GM12878 (cell line): ENCODE measurements at regions of chr4 and their contacts with region 1.

Region 1: DNA sequence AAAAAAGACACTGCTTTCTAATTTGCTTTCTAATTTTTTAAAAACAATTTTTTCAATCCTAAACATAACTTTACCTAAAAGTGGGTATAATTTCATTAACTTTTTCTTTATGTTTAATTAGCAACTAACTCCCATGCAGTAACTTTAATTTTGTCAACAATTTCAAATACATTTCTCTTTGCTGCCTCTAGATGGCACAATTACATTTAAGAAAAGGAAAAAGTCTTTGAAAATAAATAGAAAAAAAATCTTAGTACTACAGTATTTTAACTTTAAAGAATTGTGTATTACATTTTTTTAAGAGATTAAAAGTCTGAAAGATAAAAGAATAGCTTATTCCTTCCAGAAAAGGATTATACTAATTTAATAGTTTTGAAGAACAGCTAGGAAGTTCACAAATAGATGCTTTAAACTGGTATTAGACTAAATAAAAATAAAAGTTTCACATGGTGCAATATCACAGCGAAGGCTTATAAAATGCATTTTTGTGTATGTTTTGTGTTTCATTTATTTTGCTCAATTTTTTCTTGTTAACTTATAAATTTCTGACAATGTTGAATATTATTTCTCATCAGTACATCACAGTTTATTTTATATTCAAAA is 105.1 kb downstream of the ADGRA3 start:
- DNase-seq: no peak
- ATAC-seq: no peak
- H3K4me3 ChIP-seq: no peak overlapping the region
- H3K27ac ChIP-seq: no peak overlapping the region
- H3K4me1 ChIP-seq: no peaks in the 10 kb centered on the region
- H3K27me3 ChIP-seq: no peaks in the 10 kb centered on the region
- CTCF ChIP-seq: peak in 2 of 3 experiments; percentile 31 to 46; a peak in 4 of 6 replicates
- EP300 ChIP-seq: no peak
- POLR2A ChIP-seq: no peak
- RAD21 ChIP-seq: peak; percentile 34; the same call in 1 of the 2 replicates

Region 2: GRCh38 chr4:22434895-22435294 is 24.1 kb after region 1 on chr4:
- CTCF ChIA-PET with region 1: interaction called, 14 read pairs
- POLR2A ChIA-PET with region 1: no interaction called
- RAD21 ChIA-PET with region 1: interaction called, 11 read pairs
- SMC1A ChIA-PET with region 1: interaction called, 8 read pairs
- in situ Hi-C with region 1: no loop called
- intact Hi-C with region 1: no loop called
- DNase-seq: no peak
- ATAC-seq: peak; percentile 91
- H3K4me3 ChIP-seq: no peak overlapping the region
- H3K27ac ChIP-seq: no peak overlapping the region
- H3K4me1 ChIP-seq: no peaks in the 10 kb centered on the region
- H3K27me3 ChIP-seq: no peaks in the 10 kb centered on the region
- CTCF ChIP-seq: peak; percentile 14 to 56 (median 44); a peak in 3 of 6 replicates
- EP300 ChIP-seq: no peak
- POLR2A ChIP-seq: no peak
- RAD21 ChIP-seq: peak; percentile 13; the same call in 1 of the 2 replicates

Region 3: GRCh38 chr4:22473268-22473667 is 62.5 kb after region 1 on chr4:
- CTCF ChIA-PET with region 1: interaction called, 13 read pairs
- POLR2A ChIA-PET with region 1: no interaction called
- RAD21 ChIA-PET with region 1: interaction called, 6 read pairs
- SMC1A ChIA-PET with region 1: interaction called, 5 read pairs
- in situ Hi-C with region 1: no loop called
- intact Hi-C with region 1: no loop called
- DNase-seq: no peak
- ATAC-seq: 0 out of 3 replicates have a peak, but pooled peaks have one; percentile 16
- H3K4me3 ChIP-seq: no peak overlapping the region
- H3K27ac ChIP-seq: no peak overlapping the region
- H3K4me1 ChIP-seq: no peaks in the 10 kb centered on the region
- H3K27me3 ChIP-seq: no peaks in the 10 kb centered on the region
- CTCF ChIP-seq: no peak
- EP300 ChIP-seq: no peak
- POLR2A ChIP-seq: no peak
- RAD21 ChIP-seq: no peak

Region 4: GRCh38 chr4:22515145-22515887 is 104.6 kb after region 1 on chr4:
- CTCF ChIA-PET with region 1: interaction called, 10 read pairs
- POLR2A ChIA-PET with region 1: no interaction called
- RAD21 ChIA-PET with region 1: interaction called, 4 read pairs
- SMC1A ChIA-PET with region 1: interaction called, 4 read pairs
- in situ Hi-C with region 1: no loop called
- intact Hi-C with region 1: loop called (anchors 5 kb)
- DNase-seq: no peak
- ATAC-seq: peak; percentile 42
- H3K4me3 ChIP-seq: no peak overlapping the region
- H3K27ac ChIP-seq: no peak overlapping the region
- H3K4me1 ChIP-seq: no peaks in the 10 kb centered on the region
- H3K27me3 ChIP-seq: peaks cover 0 to 3% of the 10 kb centered on the region in 2 experiments; a peak in 1 of 4 replicates
- CTCF ChIP-seq: no peak; a peak in 1 of 6 replicates
- EP300 ChIP-seq: no peak
- POLR2A ChIP-seq: no peak
- RAD21 ChIP-seq: no peak

Region 5: DNA sequence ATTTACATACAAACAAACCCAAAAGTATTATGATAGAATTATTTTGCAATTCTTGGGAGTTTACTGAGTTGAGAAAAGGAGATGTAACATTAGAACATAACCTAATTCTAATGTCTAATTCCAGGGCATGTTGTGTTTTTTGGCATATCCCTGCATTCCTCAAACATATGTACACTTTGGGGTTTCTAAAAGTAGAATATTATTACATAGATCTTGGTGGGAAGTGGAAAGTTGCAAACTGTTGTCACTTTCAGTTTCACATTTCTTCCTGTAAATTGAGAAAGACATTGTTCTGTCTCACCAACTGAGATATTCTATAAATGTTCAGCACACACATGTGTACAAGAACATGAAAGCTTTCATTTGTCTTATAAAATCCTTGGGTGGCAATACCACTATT is 257.6 kb after region 1 on chr4:
- CTCF ChIA-PET with region 1: interaction called, 16 read pairs
- POLR2A ChIA-PET with region 1: no interaction called
- RAD21 ChIA-PET with region 1: interaction called, 3 read pairs
- SMC1A ChIA-PET with region 1: interaction called, 3 read pairs
- in situ Hi-C with region 1: no loop called
- intact Hi-C with region 1: no loop called
- DNase-seq: no peak
- ATAC-seq: peak; percentile 48
- H3K4me3 ChIP-seq: no peak overlapping the region
- H3K27ac ChIP-seq: no peak overlapping the region
- H3K4me1 ChIP-seq: no peaks in the 10 kb centered on the region
- H3K27me3 ChIP-seq: no peaks in the 10 kb centered on the region
- CTCF ChIP-seq: no peak
- EP300 ChIP-seq: no peak
- POLR2A ChIP-seq: no peak
- RAD21 ChIP-seq: no peak

Region 6: GRCh38 chr4:22688236-22688635 is 277.5 kb after region 1 on chr4:
- CTCF ChIA-PET with region 1: interaction called, 31 read pairs
- POLR2A ChIA-PET with region 1: no interaction called
- RAD21 ChIA-PET with region 1: interaction called, 14 read pairs
- SMC1A ChIA-PET with region 1: interaction called, 18 read pairs
- in situ Hi-C with region 1: loop called (anchors 5 kb)
- intact Hi-C with region 1: loop called (anchors 1 kb)
- DNase-seq: no peak
- ATAC-seq: no peak
- H3K4me3 ChIP-seq: no peak overlapping the region
- H3K27ac ChIP-seq: no peak overlapping the region
- H3K4me1 ChIP-seq: no peaks in the 10 kb centered on the region
- H3K27me3 ChIP-seq: no peaks in the 10 kb centered on the region
- CTCF ChIP-seq: no peak
- EP300 ChIP-seq: no peak
- POLR2A ChIP-seq: no peak
- RAD21 ChIP-seq: no peak